Mammary epithelial cell (primary cell): ENCODE measurements at regions of chr10 and their contacts with region 1.

Region 1: DNA sequence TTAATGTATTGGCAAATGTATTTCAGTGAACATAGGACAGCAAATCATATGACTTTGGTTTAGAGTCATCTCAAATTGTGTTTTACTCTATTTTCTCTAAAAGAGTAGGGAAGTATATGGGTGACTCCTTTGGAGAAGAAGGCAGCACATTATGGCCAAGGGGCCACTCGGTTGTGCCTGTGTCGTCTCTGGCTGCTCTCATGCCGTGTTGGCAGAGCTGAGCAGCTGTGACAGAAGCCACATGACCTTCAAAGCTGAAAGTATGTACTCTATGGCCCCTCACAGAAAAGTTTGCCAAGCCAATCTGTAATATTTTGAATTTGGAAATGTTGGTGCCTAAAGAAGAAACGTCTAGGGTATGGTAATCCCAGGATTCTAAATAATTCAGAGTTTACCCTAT is 47.5 kb downstream of the TASOR2 start:
- DNase-seq: no peak
- H3K4me3 ChIP-seq: no peak overlapping the region
- H3K27ac ChIP-seq: no peak overlapping the region
- H3K4me1 ChIP-seq: no peaks in the 10 kb centered on the region
- H3K27me3 ChIP-seq: no peaks in the 10 kb centered on the region
- CTCF ChIP-seq: no peak

Region 2: GRCh38 chr10:5424751-5425150 is 307.4 kb before region 1 on chr10:
- CTCF ChIA-PET with region 1: interaction called, 10 read pairs
- dilution Hi-C with region 1: no loop called
- in situ Hi-C with region 1: no loop called
- intact Hi-C with region 1: no loop called
- DNase-seq: no peak
- H3K4me3 ChIP-seq: no peak overlapping the region
- H3K27ac ChIP-seq: no peak overlapping the region
- H3K4me1 ChIP-seq: no peaks in the 10 kb centered on the region
- H3K27me3 ChIP-seq: no peaks in the 10 kb centered on the region
- CTCF ChIP-seq: no peak